WTC11 (cell line): ENCODE measurements at regions of chr2 and their contacts with region 1.

Region 1: GRCh38 chr2:49959961-49960553 is 805.7 kb upstream of the FSHR start:
- DNase-seq: no peak
- ATAC-seq: no peak
- H3K4me3 Mint-ChIP-seq: no peak overlapping the region
- H3K27ac Mint-ChIP-seq: no peak overlapping the region
- H3K4me1 Mint-ChIP-seq: peaks cover 26% of the 10 kb centered on the region
- H3K27me3 Mint-ChIP-seq: peaks cover 6% of the 10 kb centered on the region
- CTCF ChIP-seq: no peak

Region 2: GRCh38 chr2:49933711-49934110 is 26.3 kb before region 1 on chr2:
- CTCF ChIA-PET with region 1: no interaction called
- POLR2A ChIA-PET with region 1: no interaction called
- DNase-seq: no peak
- ATAC-seq: no peak
- H3K4me3 Mint-ChIP-seq: no peak overlapping the region
- H3K27ac Mint-ChIP-seq: no peak overlapping the region
- H3K4me1 Mint-ChIP-seq: peaks cover 13% of the 10 kb centered on the region
- H3K27me3 Mint-ChIP-seq: peaks cover 100% of the 10 kb centered on the region
- CTCF ChIP-seq: no peak

Region 3: DNA sequence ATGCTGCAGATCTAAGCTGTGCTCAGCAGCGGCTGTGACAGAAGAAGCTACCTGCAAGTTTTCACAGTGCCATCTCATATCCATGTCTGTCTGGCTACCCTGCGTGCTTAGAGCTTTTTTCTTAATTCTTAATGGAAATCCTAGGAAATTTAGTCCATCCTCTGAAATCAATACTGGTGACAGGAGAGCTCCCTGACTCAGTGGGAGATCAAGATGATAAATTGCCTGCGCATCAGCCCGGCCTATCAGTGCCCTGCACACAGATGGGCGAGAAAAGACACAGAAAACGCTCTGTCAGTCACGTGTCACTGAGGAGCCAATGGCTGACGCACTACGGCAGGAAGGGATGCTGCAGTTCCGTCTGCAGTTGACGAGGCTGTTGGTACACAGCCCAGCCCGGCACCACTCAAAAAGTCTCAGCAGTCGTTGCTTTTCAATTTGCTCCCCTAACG is 13.9 kb after region 1 on chr2:
- CTCF ChIA-PET with region 1: interaction called, 17 read pairs
- POLR2A ChIA-PET with region 1: no interaction called
- DNase-seq: peak; percentile 47
- ATAC-seq: peak; percentile 92
- H3K4me3 Mint-ChIP-seq: peak overlapping the region; percentile 58
- H3K27ac Mint-ChIP-seq: peak overlapping the region; percentile 79
- H3K4me1 Mint-ChIP-seq: peaks cover 40% of the 10 kb centered on the region
- H3K27me3 Mint-ChIP-seq: peaks cover 2% of the 10 kb centered on the region; the same call in 1 of the 2 replicates
- CTCF ChIP-seq: no peak

Region 4: GRCh38 chr2:50143822-50144575 is 183.9 kb after region 1 on chr2:
- CTCF ChIA-PET with region 1: interaction called, 18 read pairs
- POLR2A ChIA-PET with region 1: no interaction called
- DNase-seq: no peak
- ATAC-seq: peak; percentile 77
- H3K4me3 Mint-ChIP-seq: no peak overlapping the region
- H3K27ac Mint-ChIP-seq: peak overlapping the region; percentile 88; the same call in 1 of the 2 replicates
- H3K4me1 Mint-ChIP-seq: peaks cover 12% of the 10 kb centered on the region
- H3K27me3 Mint-ChIP-seq: no peaks in the 10 kb centered on the region
- CTCF ChIP-seq: peak; percentile 43; the same call in 1 of the 2 replicates